A673 (cell line): ENCODE measurements at regions of chr6 and their contacts with region 1.

Region 1: DNA sequence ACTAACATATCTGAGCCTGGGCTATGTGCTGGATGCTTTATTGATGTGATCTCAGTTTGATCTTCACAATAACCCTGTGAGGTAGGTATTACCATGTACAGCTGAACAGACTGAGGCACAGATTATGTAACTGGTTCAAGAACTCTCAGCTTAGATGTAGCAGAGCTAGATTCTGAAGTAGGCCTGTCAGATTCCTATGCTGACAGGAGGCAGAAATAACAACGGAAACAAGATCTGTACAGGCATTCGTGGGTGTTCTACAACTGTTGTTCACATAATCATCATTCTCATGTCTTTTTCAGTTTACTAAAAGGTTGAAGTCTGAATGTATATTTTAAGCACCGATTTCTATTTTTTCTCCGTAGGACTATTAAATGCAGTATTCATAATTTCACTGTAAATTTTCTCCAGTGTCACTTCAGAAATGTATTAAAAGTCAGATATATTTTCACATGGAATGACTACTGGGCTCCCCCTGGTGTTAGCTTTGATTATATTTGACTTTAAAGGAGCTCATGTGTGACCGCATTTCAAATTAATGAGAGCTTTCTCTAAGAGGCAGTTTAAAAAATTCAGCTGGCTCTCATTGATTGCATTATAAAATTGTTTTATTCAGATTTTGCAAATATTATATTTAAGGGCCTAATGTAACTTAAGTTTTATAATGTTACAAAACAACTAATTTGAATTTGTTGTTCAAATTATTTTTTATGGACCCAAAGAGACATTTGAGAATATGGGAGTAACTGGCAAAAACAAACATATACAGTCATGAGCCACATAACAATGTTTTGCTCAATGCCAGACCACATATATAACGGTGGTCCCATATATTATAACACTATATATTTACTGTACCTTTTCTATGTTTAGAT is 36.4 kb upstream of the SLC17A4 start:
- DNase-seq: peak; percentile 60
- H3K4me3 ChIP-seq: no peak overlapping the region
- H3K27ac ChIP-seq: no peak overlapping the region
- H3K4me1 ChIP-seq: peaks cover 17% of the 10 kb centered on the region
- H3K27me3 ChIP-seq: no peaks in the 10 kb centered on the region
- CTCF ChIP-seq: peak; percentile 70

Region 2: DNA sequence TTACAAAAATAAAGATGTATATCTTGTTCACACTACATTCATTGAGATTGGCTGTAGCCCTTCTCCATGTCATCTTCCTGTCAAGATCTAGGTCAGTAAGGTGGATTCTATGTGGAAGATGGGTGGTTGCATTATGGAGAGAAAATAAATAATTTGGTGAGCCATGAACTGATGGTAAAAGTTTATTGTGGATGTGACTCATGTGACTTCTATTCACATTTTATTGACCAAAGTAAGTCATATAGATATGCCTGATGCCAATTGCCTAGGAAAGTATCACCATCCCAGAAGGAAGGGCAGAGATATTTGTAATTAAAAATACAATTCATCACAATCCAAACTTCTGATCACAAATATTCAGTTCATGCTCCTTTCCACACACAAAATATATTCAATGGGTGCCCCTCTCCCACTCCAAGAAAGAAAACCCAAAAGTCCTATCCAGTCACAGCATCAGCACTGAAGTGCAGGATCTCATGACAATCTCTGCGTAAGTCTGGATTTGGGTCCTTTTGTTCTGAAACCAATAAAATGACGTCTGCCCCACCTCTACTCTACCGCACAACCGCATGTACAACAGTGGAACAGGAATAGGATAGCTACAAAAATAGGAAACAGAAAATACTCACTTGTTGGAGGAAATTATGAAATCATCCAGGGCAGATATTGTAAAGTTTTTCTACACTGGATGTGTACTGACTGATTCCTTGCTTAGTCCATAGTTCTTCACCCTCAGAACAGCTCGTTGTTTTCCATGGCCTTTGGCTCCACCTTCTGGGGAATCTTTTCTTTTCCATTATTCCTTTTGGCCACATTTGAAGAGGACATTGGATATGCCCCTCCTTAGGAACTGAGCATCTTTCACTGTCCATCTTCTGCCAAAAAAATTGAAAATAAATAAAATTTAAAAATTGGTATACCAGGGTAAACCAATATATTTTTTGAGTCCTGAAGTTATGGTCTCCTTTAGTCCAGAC is 172.1 kb after region 1 on chr6:
- CTCF ChIA-PET with region 1: interaction called, 4 read pairs
- POLR2A ChIA-PET with region 1: no interaction called
- intact Hi-C with region 1: loop called (anchors 2 kb)
- DNase-seq: peak; percentile 66
- H3K4me3 ChIP-seq: no peak overlapping the region
- H3K27ac ChIP-seq: no peak overlapping the region
- H3K4me1 ChIP-seq: no peaks in the 10 kb centered on the region
- H3K27me3 ChIP-seq: no peaks in the 10 kb centered on the region
- CTCF ChIP-seq: peak; percentile 58

Region 3: DNA sequence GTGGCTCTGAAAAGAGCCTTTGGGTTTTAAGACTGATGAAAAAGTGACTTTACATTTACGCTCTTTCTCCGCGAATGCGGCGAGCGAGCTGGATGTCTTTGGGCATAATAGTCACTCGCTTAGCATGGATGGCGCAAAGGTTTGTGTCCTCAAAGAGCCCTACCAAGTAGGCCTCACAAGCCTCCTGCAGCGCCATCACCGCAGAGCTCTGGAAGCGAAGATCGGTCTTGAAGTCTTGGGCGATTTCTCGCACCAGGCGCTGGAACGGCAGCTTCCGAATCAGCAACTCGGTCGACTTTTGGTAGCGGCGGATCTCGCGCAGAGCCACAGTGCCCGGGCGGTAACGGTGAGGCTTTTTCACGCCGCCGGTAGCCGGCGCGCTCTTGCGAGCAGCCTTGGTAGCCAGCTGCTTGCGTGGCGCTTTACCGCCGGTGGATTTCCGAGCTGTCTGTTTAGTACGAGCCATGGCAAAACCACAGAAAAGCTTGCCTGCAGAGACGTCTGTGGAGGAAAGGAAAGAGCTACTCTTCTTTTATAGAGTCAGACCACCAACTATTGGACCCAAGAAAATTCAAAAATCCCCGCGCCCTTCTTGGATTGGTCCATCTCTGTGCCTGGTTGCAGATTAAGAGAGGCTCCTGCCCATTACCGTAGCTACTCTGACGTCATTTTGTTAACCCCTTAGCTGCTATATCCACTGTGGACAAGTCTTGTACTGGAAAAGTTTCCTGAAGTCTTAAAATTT is 313.7 kb after region 1 on chr6:
- CTCF ChIA-PET with region 1: no interaction called
- POLR2A ChIA-PET with region 1: no interaction called
- intact Hi-C with region 1: no loop called
- DNase-seq: peak; percentile 99
- H3K4me3 ChIP-seq: peak overlapping the region; percentile 67
- H3K27ac ChIP-seq: peak overlapping the region; percentile 91
- H3K4me1 ChIP-seq: peaks cover 21% of the 10 kb centered on the region
- H3K27me3 ChIP-seq: no peaks in the 10 kb centered on the region
- CTCF ChIP-seq: peak; percentile 33; the same call in 1 of the 2 replicates

Region 4: GRCh38 chr6:26054857-26055669 is 337.0 kb after region 1 on chr6:
- CTCF ChIA-PET with region 1: no interaction called
- POLR2A ChIA-PET with region 1: no interaction called
- intact Hi-C with region 1: no loop called
- DNase-seq: peak; percentile 96
- H3K4me3 ChIP-seq: peak overlapping the region; percentile 78
- H3K27ac ChIP-seq: peak overlapping the region; percentile 96
- H3K4me1 ChIP-seq: peaks cover 20% of the 10 kb centered on the region
- H3K27me3 ChIP-seq: no peaks in the 10 kb centered on the region
- CTCF ChIP-seq: no peak